IMR-90 (cell line): ENCODE measurements at regions of chr1 and their contacts with region 1.

Region 1: DNA sequence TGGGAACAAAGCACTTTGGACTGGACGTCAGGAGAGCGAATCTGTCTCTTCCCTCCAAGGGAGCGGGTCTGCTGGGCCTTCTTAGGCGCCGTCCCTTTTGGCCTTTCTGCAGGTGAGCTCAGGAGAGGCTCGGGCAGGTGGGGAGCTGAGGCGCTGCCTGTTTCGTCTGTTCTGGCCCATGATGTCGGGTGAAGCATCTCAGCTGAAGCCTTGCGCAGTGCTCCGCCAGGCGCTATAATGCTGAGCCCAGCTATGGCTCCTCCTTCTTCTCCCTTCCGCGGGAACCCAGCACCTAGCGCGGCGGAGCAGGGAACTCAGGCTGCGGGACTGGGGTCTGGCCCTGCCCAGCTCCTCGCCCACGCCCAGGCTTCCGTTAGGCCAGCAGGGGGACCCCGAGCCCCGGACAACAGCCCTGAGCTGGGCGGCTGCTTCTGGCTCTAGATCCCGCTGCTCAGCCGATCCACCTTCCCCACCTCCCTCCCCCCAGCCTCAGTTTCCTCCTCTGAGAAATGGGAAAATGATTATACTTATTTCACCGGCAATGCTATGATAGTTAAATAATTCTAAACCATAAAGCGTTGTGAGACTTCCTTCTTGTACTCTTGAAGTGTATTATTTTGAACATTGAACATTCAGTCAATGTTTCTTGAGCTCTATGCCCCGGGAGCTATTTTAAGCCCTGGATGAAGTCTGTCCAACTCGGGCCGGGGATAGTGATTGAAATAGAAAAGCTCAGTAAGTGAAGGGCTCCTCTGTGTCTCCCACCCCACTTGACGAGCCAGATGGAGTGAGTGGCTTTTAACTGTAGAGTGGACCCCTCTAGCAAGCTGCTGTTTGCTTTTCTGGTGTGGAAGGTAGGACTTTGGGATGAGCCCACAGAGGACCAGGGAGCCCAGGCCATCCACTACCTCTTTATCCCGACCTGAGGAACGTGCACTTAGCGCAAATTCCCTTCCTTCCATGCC is 9.6 kb upstream of the ADORA1 start:
- DNase-seq: peak; percentile 50
- ATAC-seq: peak; percentile 99
- H3K4me3 ChIP-seq: no peak overlapping the region
- H3K27ac ChIP-seq: no peak overlapping the region
- H3K4me1 ChIP-seq: no peaks in the 10 kb centered on the region
- H3K27me3 ChIP-seq: peaks cover 70% of the 10 kb centered on the region
- CTCF ChIP-seq: peak; percentile 86
- POLR2A ChIP-seq: no peak
- RAD21 ChIP-seq: peak; percentile 86

Region 2: GRCh38 chr1:202938287-202938925 is 179.5 kb before region 1 on chr1:
- CTCF ChIA-PET with region 1: no interaction called
- POLR2A ChIA-PET with region 1: no interaction called
- dilution Hi-C with region 1: no loop called
- in situ Hi-C with region 1: no loop called
- intact Hi-C with region 1: no loop called
- DNase-seq: no peak
- ATAC-seq: no peak
- H3K4me3 ChIP-seq: no peak overlapping the region
- H3K27ac ChIP-seq: no peak overlapping the region
- H3K4me1 ChIP-seq: no peaks in the 10 kb centered on the region
- H3K27me3 ChIP-seq: no peaks in the 10 kb centered on the region
- CTCF ChIP-seq: no peak
- POLR2A ChIP-seq: no peak
- RAD21 ChIP-seq: no peak

Region 3: DNA sequence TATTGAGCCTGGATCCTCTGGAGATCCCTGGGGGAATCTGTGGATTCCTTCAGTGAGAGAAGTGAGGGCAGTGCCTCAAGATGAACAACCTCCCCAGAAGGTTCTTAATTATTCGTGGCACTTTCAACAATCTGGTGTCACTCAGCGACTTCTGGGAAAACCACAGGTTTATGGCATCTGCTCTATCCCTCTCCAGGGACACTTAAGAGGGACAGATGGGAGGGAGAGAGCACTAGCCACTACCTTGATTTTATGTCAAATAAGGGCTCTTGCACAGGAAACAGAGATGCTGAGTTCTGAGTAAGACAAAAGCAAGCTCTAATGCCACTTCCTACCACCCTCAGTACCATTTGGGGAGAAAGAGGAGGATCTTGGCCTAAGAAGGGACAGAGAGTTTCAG is 89.9 kb after region 1 on chr1:
- CTCF ChIA-PET with region 1: interaction called, 4 read pairs
- POLR2A ChIA-PET with region 1: no interaction called
- dilution Hi-C with region 1: no loop called
- in situ Hi-C with region 1: loop called (anchors 5 kb)
- intact Hi-C with region 1: loop called (anchors 2 kb)
- DNase-seq: no peak
- ATAC-seq: no peak
- H3K4me3 ChIP-seq: no peak overlapping the region
- H3K27ac ChIP-seq: no peak overlapping the region
- H3K4me1 ChIP-seq: peaks cover 3% of the 10 kb centered on the region
- H3K27me3 ChIP-seq: peaks cover 4% of the 10 kb centered on the region; the same call in 1 of the 2 replicates
- CTCF ChIP-seq: no peak
- POLR2A ChIP-seq: no peak
- RAD21 ChIP-seq: no peak

Region 4: GRCh38 chr1:203216274-203217138 is 98.6 kb after region 1 on chr1:
- CTCF ChIA-PET with region 1: interaction called, 22 read pairs
- POLR2A ChIA-PET with region 1: no interaction called
- dilution Hi-C with region 1: no loop called
- in situ Hi-C with region 1: loop called (anchors 5 kb)
- intact Hi-C with region 1: loop called (anchors 1 kb)
- DNase-seq: peak; percentile 64
- ATAC-seq: peak; percentile 88
- H3K4me3 ChIP-seq: no peak overlapping the region
- H3K27ac ChIP-seq: no peak overlapping the region
- H3K4me1 ChIP-seq: no peaks in the 10 kb centered on the region
- H3K27me3 ChIP-seq: peaks cover 42% of the 10 kb centered on the region
- CTCF ChIP-seq: peak; percentile 85
- POLR2A ChIP-seq: no peak
- RAD21 ChIP-seq: peak; percentile 86

Region 5: GRCh38 chr1:203267347-203267846 is 149.5 kb after region 1 on chr1:
- CTCF ChIA-PET with region 1: interaction called, 3 read pairs
- POLR2A ChIA-PET with region 1: no interaction called
- dilution Hi-C with region 1: no loop called
- in situ Hi-C with region 1: no loop called
- intact Hi-C with region 1: loop called (anchors 5 kb)
- DNase-seq: peak; percentile 78
- ATAC-seq: peak; percentile 85
- H3K4me3 ChIP-seq: peak overlapping the region; percentile 59
- H3K27ac ChIP-seq: peak overlapping the region; percentile 71
- H3K4me1 ChIP-seq: no peaks in the 10 kb centered on the region
- H3K27me3 ChIP-seq: peaks cover 13% of the 10 kb centered on the region
- CTCF ChIP-seq: peak; percentile 88
- POLR2A ChIP-seq: no peak
- RAD21 ChIP-seq: peak; percentile 73